ENCODE measurements at regions of chr17 and their contacts with region 1.

Region 1: DNA sequence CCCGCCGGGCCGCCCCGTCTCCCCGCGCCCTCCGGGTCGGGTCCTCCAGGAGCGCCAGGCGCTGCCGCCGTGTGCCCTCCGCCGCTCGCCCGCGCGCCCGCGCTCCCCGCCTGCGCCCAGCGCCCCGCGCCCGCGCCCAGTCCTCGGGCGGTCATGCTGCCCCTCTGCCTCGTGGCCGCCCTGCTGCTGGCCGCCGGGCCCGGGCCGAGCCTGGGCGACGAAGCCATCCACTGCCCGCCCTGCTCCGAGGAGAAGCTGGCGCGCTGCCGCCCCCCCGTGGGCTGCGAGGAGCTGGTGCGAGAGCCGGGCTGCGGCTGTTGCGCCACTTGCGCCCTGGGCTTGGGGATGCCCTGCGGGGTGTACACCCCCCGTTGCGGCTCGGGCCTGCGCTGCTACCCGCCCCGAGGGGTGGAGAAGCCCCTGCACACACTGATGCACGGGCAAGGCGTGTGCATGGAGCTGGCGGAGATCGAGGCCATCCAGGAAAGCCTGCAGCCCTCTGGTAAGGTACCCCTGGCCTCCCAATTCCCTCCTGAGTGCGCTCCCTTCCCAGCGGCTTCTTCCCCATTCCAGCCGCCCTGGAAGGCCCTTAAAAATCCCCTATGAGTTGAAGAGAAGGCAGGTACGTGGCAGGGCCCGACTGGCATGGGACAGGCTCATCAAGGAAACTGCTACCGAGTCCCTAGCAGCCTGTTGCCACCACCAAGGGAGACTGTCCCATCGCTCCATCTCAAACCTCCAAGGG is 505 bp downstream of the IGFBP4 start:
- DNase-seq: peak; percentile 85
- CTCF ChIP-seq: peak; percentile 80

Region 2: GRCh38 chr17:40536295-40537171 is 92.8 kb after region 1 on chr17:
- in situ Hi-C with region 1: loop called (anchors 10 kb)
- DNase-seq: no peak
- CTCF ChIP-seq: no peak

Region 3: GRCh38 chr17:40615295-40615988 is 171.7 kb after region 1 on chr17:
- in situ Hi-C with region 1: loop called (anchors 10 kb)
- DNase-seq: peak; percentile 84
- CTCF ChIP-seq: peak; percentile 51